Activated T-helper 1 cell treated with anti-CD3 and anti-CD28 coated beads, Interleukin-12 subunit alpha, Interleukin-12 subunit beta, Interleukin-2, Interleukin-4 antibody, amounts not matched to agents 30 ng/mL and 10 ng/mL and 1 ng/mL, durations not matched to agents 14 hours and 24 hours and 36 hours (primary cell): ENCODE measurements at regions of chr6 and their contacts with region 1.

Region 1: DNA sequence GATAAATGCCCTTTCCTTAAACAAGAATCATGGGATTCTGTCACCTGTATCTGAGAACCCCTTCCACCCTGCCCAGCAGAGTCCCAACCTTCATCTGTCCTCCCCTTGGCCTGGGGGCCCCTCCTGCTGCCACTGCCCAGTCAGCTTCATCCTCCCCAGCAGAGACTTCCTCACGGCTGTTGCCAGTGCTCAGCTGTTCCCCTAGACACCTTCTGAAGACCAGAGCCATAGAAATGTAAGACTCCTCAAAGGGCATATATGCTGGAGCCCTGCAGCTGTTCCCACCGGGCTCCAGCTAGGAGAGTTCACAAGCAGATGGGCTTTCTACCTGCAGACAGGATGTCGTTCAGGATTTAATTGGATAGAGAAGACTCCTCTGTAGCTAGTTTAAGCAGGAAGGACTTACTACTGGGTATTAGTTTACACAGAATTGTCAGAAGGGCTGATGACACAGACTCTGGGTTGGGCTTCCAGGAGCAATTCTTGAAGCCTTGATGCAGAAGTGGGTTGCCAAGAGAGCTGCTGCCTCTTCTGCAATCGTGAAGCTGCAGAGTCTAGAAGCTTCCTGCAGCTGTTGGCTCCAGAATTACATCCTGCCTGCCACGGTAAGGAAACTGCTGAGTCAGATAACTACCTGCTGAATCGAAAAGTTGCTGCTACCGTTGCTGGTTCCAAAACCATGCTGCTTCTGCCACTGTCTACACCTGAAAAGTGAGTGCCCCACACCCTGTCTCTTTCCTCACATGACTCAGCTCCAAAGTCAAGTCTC is 57.1 kb upstream of the MLN start:
- DNase-seq: peak; percentile 51
- H3K4me3 Mint-ChIP-seq: peak overlapping the region; percentile 13
- H3K27ac Mint-ChIP-seq: peak overlapping the region; percentile 36
- H3K4me1 Mint-ChIP-seq: peaks cover 70% of the 10 kb centered on the region
- H3K27me3 Mint-ChIP-seq: peaks cover 2% of the 10 kb centered on the region

Region 2: GRCh38 chr6:33132081-33132524 is 728.8 kb before region 1 on chr6:
- intact Hi-C with region 1: no loop called
- DNase-seq: no peak
- H3K4me3 Mint-ChIP-seq: no peak overlapping the region
- H3K27ac Mint-ChIP-seq: no peak overlapping the region
- H3K4me1 Mint-ChIP-seq: peaks cover 32% of the 10 kb centered on the region
- H3K27me3 Mint-ChIP-seq: peaks cover 2% of the 10 kb centered on the region

Region 3: GRCh38 chr6:33840048-33840926 is 20.6 kb before region 1 on chr6:
- intact Hi-C with region 1: loop called (anchors 2 kb)
- DNase-seq: peak; percentile 48
- H3K4me3 Mint-ChIP-seq: peak overlapping the region; percentile 28
- H3K27ac Mint-ChIP-seq: peak overlapping the region; percentile 73
- H3K4me1 Mint-ChIP-seq: peaks cover 20% of the 10 kb centered on the region
- H3K27me3 Mint-ChIP-seq: peaks cover 11% of the 10 kb centered on the region

Region 4: GRCh38 chr6:35165630-35166071 is 1304.8 kb after region 1 on chr6:
- intact Hi-C with region 1: no loop called
- DNase-seq: no peak
- H3K4me3 Mint-ChIP-seq: no peak overlapping the region
- H3K27ac Mint-ChIP-seq: peak overlapping the region; percentile 80
- H3K4me1 Mint-ChIP-seq: peaks cover 14% of the 10 kb centered on the region
- H3K27me3 Mint-ChIP-seq: peaks cover 21% of the 10 kb centered on the region